ENCODE measurements at regions of chr2 and their contacts with region 1.

Region 1: DNA sequence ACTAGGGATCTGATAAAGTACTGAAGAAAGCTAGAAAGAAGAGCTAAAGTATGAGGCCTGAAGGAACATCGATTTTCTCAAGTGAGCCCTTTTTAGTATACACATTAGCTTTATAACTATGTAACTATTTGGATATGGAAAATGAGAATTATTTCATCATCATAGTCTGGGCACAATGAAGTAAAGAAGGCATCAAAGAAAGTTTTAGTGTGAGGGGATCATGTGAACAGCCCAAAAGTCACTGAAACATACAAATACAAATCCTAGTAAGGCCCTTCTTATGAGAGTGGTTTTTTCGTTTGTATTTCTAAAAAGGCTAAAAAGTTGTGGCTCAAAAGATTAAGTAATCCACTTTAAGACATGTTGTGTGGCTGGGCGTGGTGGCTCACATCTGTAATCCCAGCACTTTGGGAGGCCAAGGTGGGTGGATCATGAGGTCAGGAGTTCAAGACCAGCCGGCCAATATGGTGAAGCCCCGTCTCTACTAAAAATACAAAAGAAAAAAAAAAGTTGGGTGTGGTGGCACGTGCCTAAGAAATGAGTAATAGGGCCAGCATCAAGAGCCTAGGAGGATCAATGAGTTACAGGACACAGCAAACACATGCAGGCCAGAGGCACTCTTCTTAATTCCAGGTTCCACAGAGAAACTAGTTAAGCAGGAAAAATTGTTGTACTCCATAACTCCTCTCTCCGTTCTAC is 61.9 kb downstream of the PUM2 start:
- DNase-seq: no peak
- ATAC-seq: no peak
- H3K4me3 ChIP-seq: no peak overlapping the region
- H3K4me3 Mint-ChIP-seq: no peak overlapping the region
- H3K27ac ChIP-seq: no peak overlapping the region
- H3K27ac Mint-ChIP-seq: no peak overlapping the region
- H3K4me1 ChIP-seq: no peaks in the 10 kb centered on the region
- H3K4me1 Mint-ChIP-seq: peaks cover 18% of the 10 kb centered on the region
- H3K27me3 ChIP-seq: no peaks in the 10 kb centered on the region
- H3K27me3 Mint-ChIP-seq: no peaks in the 10 kb centered on the region
- CTCF ChIP-seq: no peak

Region 2: DNA sequence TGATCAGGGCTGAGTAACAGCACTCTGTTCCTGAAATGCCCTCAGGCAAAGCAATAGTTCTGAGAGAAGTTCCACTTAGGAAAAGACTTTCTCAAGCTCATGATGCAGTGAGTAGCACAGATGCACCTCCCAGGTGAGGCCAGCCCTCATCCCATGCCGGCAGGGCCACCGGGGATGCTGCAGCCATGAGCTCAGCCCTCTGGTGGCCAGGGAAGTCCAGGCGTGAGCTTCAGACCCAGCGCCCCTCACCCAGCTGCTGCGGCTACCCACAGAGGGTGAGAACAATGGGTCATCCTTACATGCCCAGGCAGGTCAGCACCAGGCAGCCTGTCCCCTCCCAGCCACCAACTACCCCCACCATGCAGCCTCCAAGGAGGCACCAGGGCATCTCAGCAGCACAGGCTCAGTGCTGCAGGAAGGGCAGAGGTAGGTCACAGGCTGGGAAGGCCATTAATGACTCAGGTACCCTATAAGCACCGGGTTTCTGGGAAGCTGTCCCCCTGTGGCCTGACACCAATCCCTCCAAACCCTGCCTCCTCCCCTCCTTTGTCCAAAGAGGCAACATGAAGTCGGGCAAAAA is 437.6 kb before region 1 on chr2:
- CTCF ChIA-PET with region 1: no interaction called
- POLR2A ChIA-PET with region 1: no interaction called
- intact Hi-C with region 1: no loop called
- DNase-seq: no peak
- ATAC-seq: no peak
- H3K4me3 ChIP-seq: no peak overlapping the region
- H3K4me3 Mint-ChIP-seq: no peak overlapping the region
- H3K27ac ChIP-seq: no peak overlapping the region
- H3K27ac Mint-ChIP-seq: no peak overlapping the region
- H3K4me1 ChIP-seq: no peaks in the 10 kb centered on the region
- H3K4me1 Mint-ChIP-seq: no peaks in the 10 kb centered on the region
- H3K27me3 ChIP-seq: no peaks in the 10 kb centered on the region
- H3K27me3 Mint-ChIP-seq: peaks cover 5% of the 10 kb centered on the region
- CTCF ChIP-seq: no peak

Region 3: GRCh38 chr2:20012299-20013125 is 276.3 kb before region 1 on chr2 and contains the start of gene MATN3:
- CTCF ChIA-PET with region 1: no interaction called
- POLR2A ChIA-PET with region 1: no interaction called
- intact Hi-C with region 1: no loop called
- DNase-seq: peak in 5 of 14 experiments; percentile 2 to 29 (median 14)
- ATAC-seq: peak; percentile 37
- H3K4me3 ChIP-seq: peak within 1 kb of the TSS; percentile 32
- H3K4me3 Mint-ChIP-seq: peak within 1 kb of the TSS; percentile 83
- H3K27ac ChIP-seq: no peak within 1 kb of the TSS
- H3K27ac Mint-ChIP-seq: no peak within 1 kb of the TSS
- H3K4me1 ChIP-seq: peaks cover 14% of the 10 kb centered on the region
- H3K4me1 Mint-ChIP-seq: peaks cover 14% of the 10 kb centered on the region
- H3K27me3 ChIP-seq: peaks cover 12 to 28% of the 10 kb centered on the region in 2 experiments
- H3K27me3 Mint-ChIP-seq: peaks cover 64% of the 10 kb centered on the region
- CTCF ChIP-seq: no peak
- total RNA-seq, gene MATN3: not detected

Region 4: DNA sequence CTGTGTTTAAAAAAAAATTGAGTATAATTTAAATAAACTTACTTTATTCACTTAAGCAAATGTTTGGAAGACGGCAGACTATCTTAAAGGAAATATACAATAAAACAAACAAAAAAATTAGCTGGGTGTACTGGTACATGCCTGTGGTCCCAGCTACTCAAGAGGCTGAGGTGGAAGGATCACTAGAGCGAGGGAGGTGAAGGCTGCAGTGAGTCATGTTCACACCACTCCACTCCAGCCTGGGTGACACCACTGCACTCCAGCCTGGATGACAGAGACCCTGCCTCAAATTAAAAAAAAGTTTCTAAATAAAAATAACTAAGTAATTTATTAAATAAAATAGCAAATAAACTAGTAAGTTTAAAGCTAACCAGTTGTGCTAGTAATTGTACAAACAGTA is 54.3 kb after region 1 on chr2:
- CTCF ChIA-PET with region 1: no interaction called
- POLR2A ChIA-PET with region 1: no interaction called
- intact Hi-C with region 1: loop called in 1 of 2 experiments (anchors 5 kb)
- DNase-seq: peak in 2 of 14 experiments; percentile 23 to 31
- ATAC-seq: no peak
- H3K4me3 ChIP-seq: no peak overlapping the region
- H3K4me3 Mint-ChIP-seq: peak overlapping the region; percentile 26
- H3K27ac ChIP-seq: no peak overlapping the region
- H3K27ac Mint-ChIP-seq: peak overlapping the region; percentile 43
- H3K4me1 ChIP-seq: peaks cover 50% of the 10 kb centered on the region
- H3K4me1 Mint-ChIP-seq: peaks cover 90% of the 10 kb centered on the region
- H3K27me3 ChIP-seq: no peaks in the 10 kb centered on the region
- H3K27me3 Mint-ChIP-seq: no peaks in the 10 kb centered on the region
- CTCF ChIP-seq: no peak